CD8-positive, alpha-beta T cell (primary cell): ENCODE measurements at regions of chr12 and their contacts with region 1.

Region 1: GRCh38 chr12:120495723-120496412 is at the start of gene DYNLL1:
- DNase-seq: peak; percentile 95 to 98 (median 97)
- ATAC-seq: peak; percentile 97
- H3K4me3 ChIP-seq: peak within 1 kb of the TSS; percentile 80 to 96
- H3K4me3 Mint-ChIP-seq: peak within 1 kb of the TSS; percentile 94
- H3K27ac ChIP-seq: peak within 1 kb of the TSS; percentile 79 to 84
- H3K27ac Mint-ChIP-seq: peak within 1 kb of the TSS; percentile 90
- H3K4me1 ChIP-seq: peaks cover 17% of the 10 kb centered on the region
- H3K4me1 Mint-ChIP-seq: peaks cover 32% of the 10 kb centered on the region
- H3K27me3 ChIP-seq: no peaks in the 10 kb centered on the region
- H3K27me3 Mint-ChIP-seq: no peaks in the 10 kb centered on the region
- CTCF ChIP-seq: no peak
- total RNA-seq, gene DYNLL1: 25.9 to 26.1 TPM

Region 2: GRCh38 chr12:120327593-120327992 is 168.3 kb before region 1 on chr12 and contains the start of gene PLA2G1B:
- CTCF ChIA-PET with region 1: no interaction called
- POLR2A ChIA-PET with region 1: no interaction called
- intact Hi-C with region 1: loop called in 1 of 2 experiments (anchors 1 kb)
- DNase-seq: no peak
- ATAC-seq: no peak
- H3K4me3 ChIP-seq: no peak within 1 kb of the TSS
- H3K4me3 Mint-ChIP-seq: no peak within 1 kb of the TSS
- H3K27ac ChIP-seq: no peak within 1 kb of the TSS
- H3K27ac Mint-ChIP-seq: no peak within 1 kb of the TSS
- H3K4me1 ChIP-seq: no peaks in the 10 kb centered on the region
- H3K4me1 Mint-ChIP-seq: peaks cover 7% of the 10 kb centered on the region
- H3K27me3 ChIP-seq: no peaks in the 10 kb centered on the region
- H3K27me3 Mint-ChIP-seq: peaks cover 3% of the 10 kb centered on the region
- CTCF ChIP-seq: no peak
- total RNA-seq, gene PLA2G1B: not detected

Region 3: DNA sequence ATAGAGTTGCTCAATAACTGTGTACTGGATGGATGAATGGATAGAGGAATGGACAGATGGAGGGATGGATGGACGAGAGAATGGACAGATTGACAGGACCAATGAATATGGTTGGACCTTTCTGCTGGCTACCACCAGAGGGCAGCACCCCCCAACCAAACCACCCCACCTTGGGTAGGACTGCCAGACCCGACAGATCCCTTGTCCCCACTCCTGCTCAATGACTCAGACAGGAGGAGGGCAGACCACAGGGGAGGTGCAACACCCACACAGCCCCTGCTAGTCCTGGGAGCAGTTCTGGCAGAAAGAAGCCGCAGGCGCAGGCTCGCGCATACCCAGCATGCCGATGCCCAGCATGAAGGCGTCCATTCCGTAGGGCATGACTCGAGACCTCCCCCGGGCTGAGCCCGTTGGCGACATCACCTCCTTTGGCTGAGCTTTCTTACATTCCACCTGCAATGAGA is 139.3 kb before region 1 on chr12:
- CTCF ChIA-PET with region 1: interaction called, 4 read pairs
- POLR2A ChIA-PET with region 1: no interaction called
- intact Hi-C with region 1: loop called (anchors 1 to 10 kb)
- DNase-seq: peak; percentile 39 to 83 (median 75)
- ATAC-seq: peak; percentile 96
- H3K4me3 ChIP-seq: no peak overlapping the region
- H3K4me3 Mint-ChIP-seq: no peak overlapping the region
- H3K27ac ChIP-seq: no peak overlapping the region
- H3K27ac Mint-ChIP-seq: no peak overlapping the region
- H3K4me1 ChIP-seq: no peaks in the 10 kb centered on the region
- H3K4me1 Mint-ChIP-seq: peaks cover 2% of the 10 kb centered on the region
- H3K27me3 ChIP-seq: peaks cover 0 to 2% of the 10 kb centered on the region in 2 experiments
- H3K27me3 Mint-ChIP-seq: peaks cover 32% of the 10 kb centered on the region
- CTCF ChIP-seq: peak; percentile 89

Region 4: GRCh38 chr12:120381752-120382419 is 114.0 kb before region 1 on chr12:
- CTCF ChIA-PET with region 1: no interaction called
- POLR2A ChIA-PET with region 1: no interaction called
- intact Hi-C with region 1: no loop called
- DNase-seq: no peak
- ATAC-seq: no peak
- H3K4me3 ChIP-seq: no peak overlapping the region
- H3K4me3 Mint-ChIP-seq: no peak overlapping the region
- H3K27ac ChIP-seq: no peak overlapping the region
- H3K27ac Mint-ChIP-seq: no peak overlapping the region
- H3K4me1 ChIP-seq: no peaks in the 10 kb centered on the region
- H3K4me1 Mint-ChIP-seq: no peaks in the 10 kb centered on the region
- H3K27me3 ChIP-seq: peaks cover 0 to 11% of the 10 kb centered on the region in 2 experiments
- H3K27me3 Mint-ChIP-seq: peaks cover 39% of the 10 kb centered on the region
- CTCF ChIP-seq: no peak

Region 5: GRCh38 chr12:120445911-120446843 is 49.7 kb before region 1 on chr12 and contains the starts of genes GATC and TRIAP1:
- CTCF ChIA-PET with region 1: interaction called, 3 read pairs
- POLR2A ChIA-PET with region 1: interaction called, 4 read pairs
- intact Hi-C with region 1: loop called in 1 of 2 experiments (anchors 2 kb)
- DNase-seq: peak; percentile 69 to 92 (median 87)
- ATAC-seq: peak; percentile 96
- H3K4me3 ChIP-seq: peak within 1 kb of the TSS; percentile 83 to 98
- H3K4me3 Mint-ChIP-seq: peak within 1 kb of the TSS; percentile 97
- H3K27ac ChIP-seq: peak within 1 kb of the TSS; percentile 89 to 93
- H3K27ac Mint-ChIP-seq: peak within 1 kb of the TSS; percentile 98
- H3K4me1 ChIP-seq: peaks cover 21% of the 10 kb centered on the region
- H3K4me1 Mint-ChIP-seq: peaks cover 32% of the 10 kb centered on the region
- H3K27me3 ChIP-seq: no peaks in the 10 kb centered on the region
- H3K27me3 Mint-ChIP-seq: no peaks in the 10 kb centered on the region
- CTCF ChIP-seq: no peak
- total RNA-seq, gene GATC: 16.6 to 17.3 TPM
- total RNA-seq, gene TRIAP1: 35.8 to 36.0 TPM

Region 6: DNA sequence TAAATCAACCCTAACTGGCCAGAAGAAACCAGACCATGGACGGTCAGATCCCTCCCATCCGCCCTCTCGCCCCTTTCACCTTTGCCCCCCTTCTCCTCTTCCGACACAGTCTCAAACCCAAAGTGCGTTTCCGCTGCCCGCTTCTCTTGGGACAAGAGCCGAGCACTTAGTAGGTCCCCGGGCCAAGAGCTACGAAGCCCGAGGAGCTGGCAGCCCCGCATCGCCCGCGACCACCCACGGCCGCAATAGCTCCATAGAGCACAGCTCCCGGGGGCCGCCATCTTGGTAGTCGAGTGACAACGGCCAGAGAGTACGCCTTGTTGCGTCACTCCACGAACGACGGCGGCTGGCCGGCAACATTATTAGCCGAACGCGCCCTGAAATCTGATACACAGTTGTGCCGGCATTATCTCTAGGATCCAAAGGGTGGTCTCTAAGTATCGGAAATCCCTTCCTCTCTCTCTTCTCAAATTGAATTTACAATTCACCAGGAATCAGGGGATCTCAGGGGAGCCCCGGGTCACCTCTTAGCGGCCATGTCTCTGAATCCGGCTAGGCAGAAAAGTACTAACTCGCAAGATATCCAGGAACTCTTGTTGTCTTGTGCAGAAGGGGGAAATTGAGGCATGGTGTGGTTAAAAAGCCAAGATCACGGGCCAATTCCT is 33.1 kb after region 1 on chr12 and contains the start of gene COQ5:
- CTCF ChIA-PET with region 1: interaction called, 3 read pairs
- POLR2A ChIA-PET with region 1: interaction called, 9 read pairs
- intact Hi-C with region 1: loop called (anchors 1 to 2 kb)
- DNase-seq: peak; percentile 70 to 90 (median 85)
- ATAC-seq: peak; percentile 96
- H3K4me3 ChIP-seq: peak within 1 kb of the TSS; percentile 63 to 75
- H3K4me3 Mint-ChIP-seq: peak within 1 kb of the TSS; percentile 100
- H3K27ac ChIP-seq: peak within 1 kb of the TSS; percentile 81 to 82
- H3K27ac Mint-ChIP-seq: peak within 1 kb of the TSS; percentile 99
- H3K4me1 ChIP-seq: peaks cover 5% of the 10 kb centered on the region
- H3K4me1 Mint-ChIP-seq: peaks cover 30% of the 10 kb centered on the region
- H3K27me3 ChIP-seq: no peaks in the 10 kb centered on the region
- H3K27me3 Mint-ChIP-seq: no peaks in the 10 kb centered on the region
- CTCF ChIP-seq: no peak
- total RNA-seq, gene COQ5: 7.7 to 9.0 TPM

Region 7: GRCh38 chr12:120534203-120534702 is 38.4 kb after region 1 on chr12 and contains the start of gene RNF10:
- CTCF ChIA-PET with region 1: interaction called, 3 read pairs
- POLR2A ChIA-PET with region 1: interaction called, 9 read pairs
- intact Hi-C with region 1: loop called (anchors 1 to 2 kb)
- DNase-seq: peak; percentile 48 to 92 (median 73)
- ATAC-seq: peak; percentile 69
- H3K4me3 ChIP-seq: peak within 1 kb of the TSS; percentile 89 to 95
- H3K4me3 Mint-ChIP-seq: peak within 1 kb of the TSS; percentile 96
- H3K27ac ChIP-seq: peak within 1 kb of the TSS; percentile 76 to 83
- H3K27ac Mint-ChIP-seq: peak within 1 kb of the TSS; percentile 95
- H3K4me1 ChIP-seq: peaks cover 38% of the 10 kb centered on the region
- H3K4me1 Mint-ChIP-seq: peaks cover 57% of the 10 kb centered on the region
- H3K27me3 ChIP-seq: no peaks in the 10 kb centered on the region
- H3K27me3 Mint-ChIP-seq: no peaks in the 10 kb centered on the region
- CTCF ChIP-seq: no peak
- total RNA-seq, gene RNF10: 402 to 410 TPM